ENCODE measurements at regions of chr16 and their contacts with region 1.

Region 1: DNA sequence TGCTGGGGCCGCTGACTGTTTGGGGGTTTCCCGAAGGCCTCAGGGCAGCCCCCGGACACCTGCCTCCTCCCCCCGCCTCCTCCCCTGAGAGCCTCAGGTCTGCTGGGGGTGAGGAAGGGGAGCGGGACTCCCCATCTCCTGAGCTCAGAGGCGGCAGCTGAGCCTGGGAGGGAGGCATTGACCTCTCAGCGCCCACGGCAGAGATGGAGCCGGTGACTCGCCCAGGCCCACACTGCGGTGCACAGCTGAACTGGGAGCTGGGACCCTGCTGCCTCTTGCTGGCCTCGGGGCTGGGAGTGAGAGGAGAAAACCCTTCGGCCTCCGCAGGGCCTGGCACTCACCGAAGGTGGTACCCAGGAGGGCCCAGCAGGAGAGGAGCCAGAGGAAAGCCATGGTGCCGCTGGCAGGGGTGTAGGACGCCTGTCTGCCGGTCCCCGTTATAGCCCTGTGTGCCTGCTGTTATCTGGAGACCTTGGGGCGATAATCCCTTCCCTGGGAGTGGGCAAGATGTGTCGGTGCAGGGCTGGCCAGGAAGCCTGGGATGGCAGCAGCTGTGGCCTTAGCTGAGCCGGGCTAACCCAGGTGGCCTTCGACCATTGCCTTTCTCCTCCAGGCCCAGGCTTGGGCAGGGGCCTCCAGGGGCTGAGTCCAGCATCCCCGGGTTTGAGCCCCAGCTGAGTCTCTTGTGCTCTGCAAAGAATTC is at the start of gene CTRB2:
- DNase-seq: peak in 1 of 4 donors; percentile 71
- ATAC-seq: no peak
- H3K4me3 ChIP-seq: no peak within 1 kb of the TSS
- H3K27ac ChIP-seq: no peak within 1 kb of the TSS
- H3K4me1 ChIP-seq: no peaks in the 10 kb centered on the region
- H3K27me3 ChIP-seq: no peaks in the 10 kb centered on the region
- CTCF ChIP-seq: no peak
- polyA plus RNA-seq, gene CTRB2: 0.14 TPM in 1 of 6 donors, not detected in the others

Region 2: DNA sequence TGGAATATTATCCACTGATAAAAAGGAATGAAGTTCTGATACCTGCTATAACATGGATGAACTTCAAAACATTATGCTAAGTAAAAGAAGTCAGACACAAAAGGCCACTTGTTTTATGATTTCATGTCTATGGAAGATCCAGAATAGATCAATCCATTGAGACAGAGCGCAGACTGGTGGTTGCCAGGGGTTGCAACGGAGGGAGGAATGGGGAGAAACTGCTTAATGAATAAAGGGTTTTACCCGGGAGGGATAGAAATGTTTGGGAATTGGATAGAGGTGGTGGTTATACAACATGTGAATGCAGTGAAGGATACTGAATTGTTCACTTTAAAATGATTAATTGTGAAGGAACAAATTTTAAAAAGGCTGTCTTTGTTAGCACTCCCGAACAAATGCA is 252.1 kb before region 1 on chr16:
- intact Hi-C with region 1: no loop called
- DNase-seq: no peak
- ATAC-seq: no peak
- H3K4me3 ChIP-seq: no peak overlapping the region
- H3K27ac ChIP-seq: no peak overlapping the region
- H3K4me1 ChIP-seq: no peaks in the 10 kb centered on the region
- H3K27me3 ChIP-seq: no peaks in the 10 kb centered on the region
- CTCF ChIP-seq: no peak

Region 3: DNA sequence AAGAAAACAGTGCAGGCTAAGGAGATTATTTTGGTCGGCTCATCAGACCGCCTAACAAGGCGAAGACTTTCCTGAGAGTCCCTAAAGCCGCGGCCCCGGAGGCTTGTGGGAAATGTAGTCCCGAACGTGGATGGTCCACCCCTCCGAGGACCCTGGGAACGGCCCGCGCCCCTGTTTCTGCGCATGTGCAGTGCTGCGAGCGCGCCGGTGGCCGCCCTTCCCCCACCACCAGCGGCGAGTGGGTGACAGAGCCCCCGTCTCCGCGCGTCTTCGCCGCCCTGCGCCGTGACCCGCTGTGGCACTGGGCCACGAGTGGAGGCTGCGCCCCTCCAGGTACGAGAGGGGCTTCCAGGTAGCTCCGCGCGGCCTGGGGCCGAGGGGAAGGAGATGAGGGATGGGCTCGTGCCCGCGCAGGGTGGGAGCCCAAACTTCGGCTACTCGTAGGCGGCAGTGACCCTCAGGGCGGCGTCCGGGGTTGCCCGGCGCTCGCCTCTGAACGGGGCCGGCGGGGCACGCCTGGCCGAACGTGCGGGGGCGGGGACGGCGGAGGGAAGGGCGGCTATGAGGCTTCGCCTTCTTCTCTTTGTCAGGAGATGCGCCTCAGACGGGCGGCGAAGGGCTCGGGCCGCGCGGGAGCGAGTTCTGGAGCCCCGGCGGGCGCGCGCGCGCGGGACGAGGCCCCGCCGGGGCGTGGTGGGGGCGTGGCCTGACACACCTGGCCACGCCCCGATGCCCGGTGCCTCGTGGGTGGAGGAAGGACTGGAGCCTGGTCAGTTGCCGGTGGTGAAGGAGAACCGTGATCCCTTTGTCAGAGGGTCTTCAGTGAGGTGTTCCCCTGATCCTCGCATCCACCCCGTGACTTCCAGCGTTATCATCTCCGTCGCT is 58.3 kb before region 1 on chr16 and contains the start of gene ZFP1:
- intact Hi-C with region 1: no loop called
- DNase-seq: peak; percentile 94 to 95 (median 95)
- ATAC-seq: peak; percentile 97
- H3K4me3 ChIP-seq: peak within 1 kb of the TSS; percentile 92 to 99
- H3K27ac ChIP-seq: peak within 1 kb of the TSS; percentile 93 to 94
- H3K4me1 ChIP-seq: peaks cover 0 to 9% of the 10 kb centered on the region in 2 donors
- H3K27me3 ChIP-seq: no peaks in the 10 kb centered on the region
- CTCF ChIP-seq: no peak
- polyA plus RNA-seq, gene ZFP1: 21.6 to 25.5 (median 23.3) TPM

Region 4: DNA sequence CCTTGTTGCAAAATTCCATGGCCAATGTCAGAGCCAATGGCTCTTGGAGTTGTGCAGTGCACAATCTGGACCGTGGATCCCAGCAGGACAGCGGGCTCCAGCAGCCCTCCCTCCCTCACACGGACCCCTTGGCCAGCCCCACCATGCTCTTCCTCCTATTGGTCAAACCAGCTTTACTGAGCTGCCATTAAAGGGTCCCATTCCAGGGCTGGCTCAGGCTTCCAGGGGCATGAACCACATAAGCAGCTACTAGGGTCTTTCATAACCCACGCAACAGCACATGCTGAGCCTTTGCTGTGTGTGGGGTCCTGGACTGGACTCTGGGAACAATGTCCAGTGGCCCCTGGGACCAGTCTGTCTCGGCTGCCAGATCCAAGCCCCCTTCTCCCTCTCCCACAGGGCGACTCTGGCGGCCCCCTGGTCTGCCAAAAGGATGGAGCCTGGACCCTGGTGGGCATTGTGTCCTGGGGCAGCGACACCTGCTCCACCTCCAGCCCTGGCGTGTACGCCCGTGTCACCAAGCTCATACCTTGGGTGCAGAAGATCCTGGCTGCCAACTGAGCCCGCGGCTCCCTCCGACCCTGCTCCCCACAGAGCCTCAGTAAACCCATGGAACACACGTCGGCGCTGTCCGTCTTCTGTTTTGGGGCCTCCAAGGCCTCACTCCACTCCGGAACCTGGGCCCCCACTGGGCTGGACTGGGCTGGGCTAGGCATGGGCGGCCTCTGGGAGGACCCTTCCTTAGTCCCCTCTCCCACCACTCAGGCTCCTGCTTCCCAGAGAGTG is 17.6 kb after region 1 on chr16:
- intact Hi-C with region 1: loop called in 1 of 2 experiments (anchors 2 kb)
- DNase-seq: peak in 1 of 4 donors; percentile 62
- ATAC-seq: no peak
- H3K4me3 ChIP-seq: no peak overlapping the region
- H3K27ac ChIP-seq: no peak overlapping the region
- H3K4me1 ChIP-seq: peaks cover 0 to 5% of the 10 kb centered on the region in 2 donors
- H3K27me3 ChIP-seq: peaks cover 0 to 24% of the 10 kb centered on the region in 2 donors
- CTCF ChIP-seq: no peak